ENCODE measurements at regions of chr10 and their contacts with region 1.

Region 1: GRCh38 chr10:31340343-31340742 is 21.3 kb downstream of the ZEB1 start:
- DNase-seq: no peak
- H3K27ac ChIP-seq: no peak overlapping the region
- CTCF ChIP-seq: no peak

Region 2: DNA sequence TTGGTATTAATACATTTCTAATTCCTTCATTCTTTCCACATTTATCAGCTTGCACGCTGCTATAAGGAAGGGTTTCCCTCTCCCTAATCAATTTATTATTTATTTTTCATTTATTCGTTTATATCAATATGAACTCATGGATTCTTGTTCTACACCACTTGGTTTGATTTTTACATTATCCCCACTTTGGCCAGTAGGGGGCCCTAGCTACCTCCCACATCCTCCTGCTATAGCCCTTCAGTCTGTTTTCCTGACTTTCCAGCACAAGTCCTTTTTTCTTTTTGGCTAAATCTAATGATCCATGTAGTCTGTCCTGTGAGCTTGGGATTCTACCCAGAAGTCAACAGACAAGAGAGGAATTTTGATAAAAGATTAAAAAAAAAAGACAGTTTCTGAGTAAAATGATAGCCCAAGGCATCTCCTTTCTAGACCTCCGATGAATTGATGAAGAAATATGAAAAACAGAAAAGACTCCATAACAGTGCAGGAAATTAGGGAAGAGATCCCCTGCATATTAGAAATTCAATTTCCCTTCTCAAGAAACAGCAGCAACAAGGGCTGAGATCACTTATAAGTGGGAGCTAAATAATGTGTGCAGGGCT is 758.5 kb before region 1 on chr10:
- CTCF ChIA-PET with region 1: interaction called, 10 read pairs
- POLR2A ChIA-PET with region 1: no interaction called
- DNase-seq: peak; percentile 34
- H3K27ac ChIP-seq: no peak overlapping the region
- CTCF ChIP-seq: peak; percentile 65